Ascending aorta (tissue), 2 donors: ENCODE measurements at regions of chr12 and their contacts with region 1.

Region 1: GRCh38 chr12:11758510-11759493 is 109.3 kb downstream of the ETV6 start:
- DNase-seq: peak in 1 of 2 donors; percentile 77
- H3K4me3 ChIP-seq: peak overlapping the region in 1 of 2 donors; percentile 19
- H3K27ac ChIP-seq: peak overlapping the region; percentile 93
- H3K4me1 ChIP-seq: peaks cover 32 to 73% of the 10 kb centered on the region in 2 donors
- H3K27me3 ChIP-seq: no peaks in the 10 kb centered on the region
- CTCF ChIP-seq: no peak

Region 2: DNA sequence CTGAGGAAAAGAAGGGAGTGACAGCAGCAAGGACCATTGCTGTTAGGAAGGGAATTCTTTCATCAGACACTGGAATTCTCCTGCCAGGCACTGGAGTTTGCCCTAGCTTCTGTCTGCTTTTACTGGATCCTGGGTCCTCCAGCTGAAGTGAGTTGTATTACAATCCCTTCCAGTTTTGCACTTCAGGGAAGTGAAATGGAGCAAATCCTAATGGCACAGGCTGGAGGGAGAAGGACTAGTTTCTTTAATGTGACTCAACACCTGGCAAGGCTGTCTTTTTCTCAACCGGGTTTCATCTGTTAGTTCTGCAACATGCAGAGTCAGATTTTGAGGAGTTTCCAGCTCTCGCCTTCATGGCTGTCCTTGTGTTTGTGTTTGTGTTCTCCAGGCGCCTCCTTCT is 63.5 kb before region 1 on chr12:
- intact Hi-C with region 1: loop called (anchors 5 kb)
- DNase-seq: peak in 1 of 2 donors; percentile 81
- H3K4me3 ChIP-seq: no peak overlapping the region
- H3K27ac ChIP-seq: peak overlapping the region; percentile 29 to 48
- H3K4me1 ChIP-seq: peaks cover 3 to 46% of the 10 kb centered on the region in 2 donors
- H3K27me3 ChIP-seq: no peaks in the 10 kb centered on the region
- CTCF ChIP-seq: peak in 1 of 3 experiments; percentile 4

Region 3: DNA sequence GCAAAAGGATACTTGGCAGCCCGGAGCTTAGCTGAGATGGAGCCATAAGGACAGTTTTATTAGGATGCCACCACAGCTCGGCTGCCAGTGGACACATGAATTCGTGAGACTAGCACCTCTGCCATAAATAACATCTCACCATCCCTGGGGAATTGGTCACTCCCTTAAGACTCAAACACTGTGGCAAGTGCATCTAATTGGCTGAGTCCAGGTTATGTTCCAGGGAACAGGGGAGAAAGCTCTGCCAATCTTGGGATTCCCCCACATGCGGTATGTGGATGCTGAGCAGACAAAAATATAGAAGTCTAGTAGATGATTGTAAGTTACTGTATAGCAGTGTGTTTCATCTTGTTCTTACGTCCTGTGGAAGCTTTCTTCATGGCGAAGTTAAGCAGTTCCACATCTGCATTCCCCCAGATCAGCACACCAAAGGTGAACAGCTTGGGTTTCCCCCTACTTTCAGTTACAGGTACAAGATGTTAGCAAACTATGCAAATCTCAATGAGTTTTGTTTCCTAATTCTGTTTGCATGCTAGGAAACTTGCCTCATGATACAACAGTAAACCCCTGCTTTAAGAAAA is 21.8 kb after region 1 on chr12:
- intact Hi-C with region 1: loop called (anchors 2 kb)
- DNase-seq: no peak
- H3K4me3 ChIP-seq: no peak overlapping the region
- H3K27ac ChIP-seq: peak overlapping the region; percentile 88 to 89
- H3K4me1 ChIP-seq: peaks cover 22 to 58% of the 10 kb centered on the region in 2 donors
- H3K27me3 ChIP-seq: no peaks in the 10 kb centered on the region
- CTCF ChIP-seq: no peak

Region 4: GRCh38 chr12:11862798-11863197 is 104.0 kb after region 1 on chr12:
- intact Hi-C with region 1: loop called (anchors 10 kb)
- DNase-seq: no peak
- H3K4me3 ChIP-seq: no peak overlapping the region
- H3K27ac ChIP-seq: peak overlapping the region; percentile 86 to 94
- H3K4me1 ChIP-seq: peaks cover 13 to 29% of the 10 kb centered on the region in 2 donors
- H3K27me3 ChIP-seq: no peaks in the 10 kb centered on the region
- CTCF ChIP-seq: no peak